ENCODE measurements at regions of chr12 and their contacts with region 1.

Region 1: DNA sequence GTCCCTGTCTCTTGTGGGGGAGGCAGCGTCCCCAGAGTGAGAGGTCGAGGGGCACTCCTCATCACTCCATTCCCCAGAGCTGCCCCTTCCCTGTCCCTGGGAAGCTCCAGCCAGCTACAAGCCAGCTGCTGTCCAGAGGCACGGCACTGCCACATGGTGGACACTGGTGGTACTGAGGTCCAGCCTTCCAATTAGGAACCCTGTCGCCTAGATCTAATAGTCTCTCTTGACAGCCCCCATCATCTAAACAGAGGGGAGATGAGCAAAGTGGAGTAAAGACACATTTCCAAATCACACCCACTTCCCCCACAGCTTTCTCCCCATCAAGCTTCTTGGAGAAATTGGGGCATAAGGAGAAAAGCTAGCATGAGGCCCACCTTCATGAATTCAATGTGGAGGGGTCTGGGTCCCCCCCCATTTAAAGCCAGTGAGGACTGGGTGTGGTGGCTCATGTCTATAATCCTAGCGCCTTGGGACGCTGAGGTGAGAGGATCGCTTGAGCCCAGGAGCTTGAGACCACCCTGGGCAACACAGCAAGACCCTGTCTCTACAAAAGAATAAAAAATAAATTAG is 2.1 kb upstream of the INHBE start:
- DNase-seq: peak in 1 of 9 donors; percentile 58
- ATAC-seq: peak; percentile 71
- H3K4me3 ChIP-seq: no peak overlapping the region
- H3K4me3 Mint-ChIP-seq: no peak overlapping the region
- H3K27ac ChIP-seq: no peak overlapping the region
- H3K27ac Mint-ChIP-seq: no peak overlapping the region
- H3K4me1 ChIP-seq: peaks cover 0 to 5% of the 10 kb centered on the region in 2 donors
- H3K4me1 Mint-ChIP-seq: peaks cover 4 to 20% (median 5%) of the 10 kb centered on the region in 7 donors
- H3K27me3 ChIP-seq: no peaks in the 10 kb centered on the region
- H3K27me3 Mint-ChIP-seq: peaks cover 0 to 7% (median 0%) of the 10 kb centered on the region in 5 donors

Region 2: DNA sequence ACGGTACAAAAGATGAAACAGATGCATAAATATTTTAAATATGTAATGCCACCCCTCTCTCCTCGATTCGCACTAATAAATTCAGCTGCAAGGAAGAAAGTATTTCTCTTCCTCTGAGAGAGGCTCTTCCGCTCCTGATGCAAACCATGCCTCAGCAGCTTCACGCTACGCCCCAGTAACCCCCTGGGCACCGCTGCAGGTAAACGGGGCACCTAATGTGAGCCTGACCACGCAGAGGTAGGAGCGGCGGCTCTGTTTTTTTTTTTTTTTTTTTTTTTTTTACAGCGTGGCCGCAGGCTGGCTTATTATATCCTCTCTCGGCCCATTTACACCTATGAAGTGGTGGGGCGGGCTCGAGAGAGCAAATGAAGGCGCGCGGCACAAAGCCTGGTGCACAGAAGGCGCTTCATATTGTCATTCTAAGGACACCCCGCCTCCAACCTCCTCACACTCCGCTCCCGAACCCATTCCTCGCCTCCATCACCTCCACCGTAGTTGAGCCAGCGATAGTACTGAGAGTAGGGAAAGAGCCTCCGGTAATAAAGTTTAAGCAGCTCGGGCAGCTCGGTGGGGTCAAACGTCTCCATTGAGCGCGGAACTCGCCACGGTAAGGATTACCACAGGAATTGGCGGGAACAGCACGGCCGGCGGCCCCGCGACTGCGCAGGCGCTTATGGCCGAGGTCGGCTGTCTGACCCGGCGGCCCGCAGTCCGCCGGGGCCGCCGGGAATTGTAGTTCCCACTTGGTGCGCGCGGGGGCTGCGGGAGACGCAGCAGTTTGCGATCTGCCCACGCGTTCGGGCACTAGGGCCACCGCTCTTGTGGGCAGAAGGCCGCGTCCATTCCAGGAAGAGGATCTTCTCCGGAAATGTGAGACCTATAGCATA is 701.1 kb before region 1 on chr12 and contains the start of gene PRIM1:
- CTCF ChIA-PET with region 1: no interaction called
- POLR2A ChIA-PET with region 1: no interaction called
- intact Hi-C with region 1: no loop called
- DNase-seq: peak; percentile 69 to 91 (median 78)
- ATAC-seq: peak; percentile 93
- H3K4me3 ChIP-seq: peak within 1 kb of the TSS; percentile 98
- H3K4me3 Mint-ChIP-seq: peak within 1 kb of the TSS; percentile 88 to 98 (median 97)
- H3K27ac ChIP-seq: peak within 1 kb of the TSS; percentile 81
- H3K27ac Mint-ChIP-seq: peak within 1 kb of the TSS; percentile 80 to 99 (median 93)
- H3K4me1 ChIP-seq: peaks cover 3 to 7% of the 10 kb centered on the region in 2 donors
- H3K4me1 Mint-ChIP-seq: peaks cover 22 to 46% (median 42%) of the 10 kb centered on the region in 7 donors
- H3K27me3 ChIP-seq: no peaks in the 10 kb centered on the region
- H3K27me3 Mint-ChIP-seq: no peaks in the 10 kb centered on the region
- total RNA-seq, gene PRIM1: 11.5 to 39.8 (median 26.2) TPM

Region 3: DNA sequence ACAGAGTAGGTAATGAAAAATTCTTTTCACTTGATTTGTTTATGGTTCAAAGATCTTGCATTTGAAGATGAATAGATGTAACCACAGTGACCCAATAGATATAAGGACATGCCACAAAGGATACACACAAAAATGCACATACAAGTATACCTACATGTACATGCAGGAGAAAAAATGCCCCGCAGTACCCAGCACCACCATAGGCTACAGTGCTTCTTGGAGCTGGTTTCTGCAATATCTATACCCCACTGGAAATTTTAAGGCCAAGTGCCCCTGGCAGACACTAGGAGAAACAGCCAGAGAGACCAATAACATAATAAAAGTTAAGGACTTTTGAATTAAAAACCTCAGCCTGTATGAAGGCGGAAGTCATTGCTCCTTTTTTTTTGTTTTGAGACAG is 189.9 kb before region 1 on chr12:
- CTCF ChIA-PET with region 1: interaction called, 6 read pairs
- POLR2A ChIA-PET with region 1: no interaction called
- intact Hi-C with region 1: loop called (anchors 1 to 2 kb)
- DNase-seq: no peak
- ATAC-seq: no peak
- H3K4me3 ChIP-seq: no peak overlapping the region
- H3K4me3 Mint-ChIP-seq: no peak overlapping the region
- H3K27ac ChIP-seq: no peak overlapping the region
- H3K27ac Mint-ChIP-seq: no peak overlapping the region
- H3K4me1 ChIP-seq: no peaks in the 10 kb centered on the region
- H3K4me1 Mint-ChIP-seq: peaks cover 0 to 5% (median 0%) of the 10 kb centered on the region in 7 donors
- H3K27me3 ChIP-seq: no peaks in the 10 kb centered on the region
- H3K27me3 Mint-ChIP-seq: no peaks in the 10 kb centered on the region

Region 4: GRCh38 chr12:57268264-57268663 is 184.8 kb before region 1 on chr12:
- CTCF ChIA-PET with region 1: interaction called, 5 read pairs
- POLR2A ChIA-PET with region 1: no interaction called
- intact Hi-C with region 1: loop called (anchors 1 to 2 kb)
- DNase-seq: no peak
- ATAC-seq: no peak
- H3K4me3 ChIP-seq: no peak overlapping the region
- H3K4me3 Mint-ChIP-seq: no peak overlapping the region
- H3K27ac ChIP-seq: no peak overlapping the region
- H3K27ac Mint-ChIP-seq: peak overlapping the region in 3 of 9 donors; percentile 20 to 90 (median 38)
- H3K4me1 ChIP-seq: no peaks in the 10 kb centered on the region
- H3K4me1 Mint-ChIP-seq: peaks cover 0 to 9% (median 2%) of the 10 kb centered on the region in 7 donors
- H3K27me3 ChIP-seq: no peaks in the 10 kb centered on the region
- H3K27me3 Mint-ChIP-seq: no peaks in the 10 kb centered on the region

Region 5: GRCh38 chr12:57280211-57281062 is 172.6 kb before region 1 on chr12:
- CTCF ChIA-PET with region 1: interaction called, 5 read pairs
- POLR2A ChIA-PET with region 1: no interaction called
- intact Hi-C with region 1: loop called in 1 of 2 experiments (anchors 1 kb)
- DNase-seq: peak in 8 of 9 donors; percentile 25 to 75 (median 54)
- ATAC-seq: peak; percentile 98
- H3K4me3 ChIP-seq: no peak overlapping the region
- H3K4me3 Mint-ChIP-seq: peak overlapping the region; percentile 7 to 72 (median 59)
- H3K27ac ChIP-seq: peak overlapping the region; percentile 74
- H3K27ac Mint-ChIP-seq: peak overlapping the region; percentile 85 to 95 (median 90)
- H3K4me1 ChIP-seq: peaks cover 10 to 15% of the 10 kb centered on the region in 2 donors
- H3K4me1 Mint-ChIP-seq: peaks cover 12 to 30% (median 21%) of the 10 kb centered on the region in 7 donors
- H3K27me3 ChIP-seq: no peaks in the 10 kb centered on the region
- H3K27me3 Mint-ChIP-seq: no peaks in the 10 kb centered on the region

Region 6: DNA sequence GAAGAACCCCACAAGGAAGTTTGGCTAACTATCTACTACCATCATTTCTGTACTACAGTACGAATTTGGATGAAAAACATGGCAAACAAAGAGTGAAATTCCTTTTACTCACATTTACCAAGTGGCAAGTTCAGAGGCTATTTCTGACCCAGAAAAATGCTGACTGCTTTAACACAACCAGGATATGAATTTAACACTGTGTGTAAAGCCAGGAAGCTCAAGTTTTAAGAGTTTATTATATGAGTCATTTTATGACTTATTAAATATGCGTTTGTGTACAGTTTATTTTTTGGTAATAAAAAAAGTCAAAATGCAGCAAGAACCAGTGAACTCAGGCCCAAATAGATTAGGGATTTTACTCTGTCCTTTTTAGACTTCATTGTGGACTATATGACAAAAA is 143.6 kb before region 1 on chr12:
- CTCF ChIA-PET with region 1: interaction called, 4 read pairs
- POLR2A ChIA-PET with region 1: no interaction called
- intact Hi-C with region 1: loop called (anchors 1 kb)
- DNase-seq: no peak
- ATAC-seq: no peak
- H3K4me3 ChIP-seq: no peak overlapping the region
- H3K4me3 Mint-ChIP-seq: no peak overlapping the region
- H3K27ac ChIP-seq: no peak overlapping the region
- H3K27ac Mint-ChIP-seq: peak overlapping the region in 1 of 9 donors; percentile 28
- H3K4me1 ChIP-seq: no peaks in the 10 kb centered on the region
- H3K4me1 Mint-ChIP-seq: peaks cover 0 to 5% (median 0%) of the 10 kb centered on the region in 7 donors
- H3K27me3 ChIP-seq: no peaks in the 10 kb centered on the region
- H3K27me3 Mint-ChIP-seq: no peaks in the 10 kb centered on the region